Activated CD8-positive, alpha-beta T cell treated with anti-CD3 and anti-CD28 coated beads for 36 hours (primary cell): ENCODE measurements at regions of chr1 and their contacts with region 1.

Region 1: DNA sequence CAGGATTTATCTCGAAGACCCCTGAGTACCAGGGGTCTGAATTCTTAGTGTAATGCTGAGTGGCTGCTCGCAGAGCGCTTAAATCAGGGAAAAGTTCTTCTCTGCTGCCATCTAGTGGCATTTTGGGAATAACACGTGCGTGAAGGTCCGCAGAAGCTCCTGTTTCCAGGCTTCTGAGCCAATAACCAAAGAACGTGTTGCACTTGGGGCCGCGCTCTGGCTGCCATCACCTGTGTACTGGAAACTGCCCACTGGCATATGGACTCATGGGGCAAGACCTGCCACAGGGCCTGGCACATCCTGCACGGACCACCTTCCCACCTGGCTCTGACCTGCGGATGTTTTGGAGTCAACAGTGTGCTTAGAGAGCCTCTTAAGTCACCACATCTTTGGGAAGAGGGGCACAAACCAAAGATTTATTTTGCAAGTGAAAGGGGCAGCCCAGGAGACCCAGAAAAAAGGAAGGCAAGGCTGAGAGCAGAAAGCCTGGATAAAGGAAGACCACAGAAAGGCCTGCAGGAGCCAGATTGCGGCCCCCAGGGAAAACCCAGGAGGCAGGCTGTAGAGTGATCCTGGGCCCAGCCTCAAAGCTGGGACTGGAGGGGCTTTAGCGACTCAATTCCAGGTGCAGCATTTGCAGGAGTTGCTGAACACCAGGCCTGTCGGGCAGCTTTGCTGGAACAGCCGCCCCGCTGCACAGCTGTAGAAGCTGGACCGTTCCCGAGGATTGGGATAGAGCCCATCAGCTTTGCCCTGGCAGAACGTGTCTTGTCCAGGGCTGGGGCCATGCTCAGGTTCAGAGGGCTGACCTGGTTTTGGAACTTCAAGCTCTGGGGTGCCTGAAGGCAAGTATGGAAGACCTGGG is 13.0 kb downstream of the CHIT1 start:
- DNase-seq: peak; percentile 69
- ATAC-seq: peak; percentile 67
- H3K4me3 Mint-ChIP-seq: no peak overlapping the region
- H3K27ac Mint-ChIP-seq: no peak overlapping the region
- H3K4me1 Mint-ChIP-seq: no peaks in the 10 kb centered on the region
- H3K27me3 Mint-ChIP-seq: no peaks in the 10 kb centered on the region
- CTCF ChIP-seq: peak; percentile 83

Region 2: DNA sequence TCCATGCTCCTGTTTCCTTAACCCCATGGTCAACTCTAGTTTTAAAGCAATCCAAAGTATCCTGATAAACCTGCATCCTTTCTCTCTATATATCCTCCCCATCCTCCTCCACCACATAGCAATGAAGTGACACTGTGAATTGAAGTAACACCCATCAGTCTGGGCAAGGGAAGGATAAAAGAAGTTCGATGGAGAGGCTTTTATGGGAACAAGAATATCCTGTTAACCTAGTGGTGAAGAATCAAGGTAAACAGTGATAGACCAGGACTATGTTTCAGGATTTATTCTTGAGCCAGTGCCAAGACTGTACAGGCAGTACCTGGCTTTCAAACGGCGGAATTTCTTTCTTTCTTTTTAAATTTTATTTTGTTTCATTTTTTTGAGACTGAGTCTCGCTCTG is 345.1 kb before region 1 on chr1:
- CTCF ChIA-PET with region 1: no interaction called
- POLR2A ChIA-PET with region 1: no interaction called
- intact Hi-C with region 1: no loop called
- DNase-seq: no peak
- ATAC-seq: no peak
- H3K4me3 Mint-ChIP-seq: no peak overlapping the region
- H3K27ac Mint-ChIP-seq: no peak overlapping the region
- H3K4me1 Mint-ChIP-seq: no peaks in the 10 kb centered on the region
- H3K27me3 Mint-ChIP-seq: peaks cover 3% of the 10 kb centered on the region
- CTCF ChIP-seq: no peak

Region 3: GRCh38 chr1:203017692-203018091 is 198.8 kb before region 1 on chr1:
- CTCF ChIA-PET with region 1: no interaction called
- POLR2A ChIA-PET with region 1: no interaction called
- intact Hi-C with region 1: no loop called
- DNase-seq: no peak
- ATAC-seq: no peak
- H3K4me3 Mint-ChIP-seq: no peak overlapping the region
- H3K27ac Mint-ChIP-seq: no peak overlapping the region
- H3K4me1 Mint-ChIP-seq: peaks cover 8% of the 10 kb centered on the region
- H3K27me3 Mint-ChIP-seq: no peaks in the 10 kb centered on the region
- CTCF ChIP-seq: no peak

Region 4: GRCh38 chr1:203084588-203085502 is 131.7 kb before region 1 on chr1:
- CTCF ChIA-PET with region 1: interaction called, 14 read pairs
- POLR2A ChIA-PET with region 1: no interaction called
- intact Hi-C with region 1: no loop called
- DNase-seq: peak; percentile 58
- ATAC-seq: peak; percentile 71
- H3K4me3 Mint-ChIP-seq: no peak overlapping the region
- H3K27ac Mint-ChIP-seq: no peak overlapping the region
- H3K4me1 Mint-ChIP-seq: no peaks in the 10 kb centered on the region
- H3K27me3 Mint-ChIP-seq: peaks cover 9% of the 10 kb centered on the region
- CTCF ChIP-seq: peak; percentile 66

Region 5: DNA sequence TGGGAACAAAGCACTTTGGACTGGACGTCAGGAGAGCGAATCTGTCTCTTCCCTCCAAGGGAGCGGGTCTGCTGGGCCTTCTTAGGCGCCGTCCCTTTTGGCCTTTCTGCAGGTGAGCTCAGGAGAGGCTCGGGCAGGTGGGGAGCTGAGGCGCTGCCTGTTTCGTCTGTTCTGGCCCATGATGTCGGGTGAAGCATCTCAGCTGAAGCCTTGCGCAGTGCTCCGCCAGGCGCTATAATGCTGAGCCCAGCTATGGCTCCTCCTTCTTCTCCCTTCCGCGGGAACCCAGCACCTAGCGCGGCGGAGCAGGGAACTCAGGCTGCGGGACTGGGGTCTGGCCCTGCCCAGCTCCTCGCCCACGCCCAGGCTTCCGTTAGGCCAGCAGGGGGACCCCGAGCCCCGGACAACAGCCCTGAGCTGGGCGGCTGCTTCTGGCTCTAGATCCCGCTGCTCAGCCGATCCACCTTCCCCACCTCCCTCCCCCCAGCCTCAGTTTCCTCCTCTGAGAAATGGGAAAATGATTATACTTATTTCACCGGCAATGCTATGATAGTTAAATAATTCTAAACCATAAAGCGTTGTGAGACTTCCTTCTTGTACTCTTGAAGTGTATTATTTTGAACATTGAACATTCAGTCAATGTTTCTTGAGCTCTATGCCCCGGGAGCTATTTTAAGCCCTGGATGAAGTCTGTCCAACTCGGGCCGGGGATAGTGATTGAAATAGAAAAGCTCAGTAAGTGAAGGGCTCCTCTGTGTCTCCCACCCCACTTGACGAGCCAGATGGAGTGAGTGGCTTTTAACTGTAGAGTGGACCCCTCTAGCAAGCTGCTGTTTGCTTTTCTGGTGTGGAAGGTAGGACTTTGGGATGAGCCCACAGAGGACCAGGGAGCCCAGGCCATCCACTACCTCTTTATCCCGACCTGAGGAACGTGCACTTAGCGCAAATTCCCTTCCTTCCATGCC is 98.6 kb before region 1 on chr1:
- CTCF ChIA-PET with region 1: interaction called, 35 read pairs
- POLR2A ChIA-PET with region 1: no interaction called
- intact Hi-C with region 1: loop called (anchors 5 kb)
- DNase-seq: peak; percentile 74
- ATAC-seq: peak; percentile 77
- H3K4me3 Mint-ChIP-seq: no peak overlapping the region
- H3K27ac Mint-ChIP-seq: no peak overlapping the region
- H3K4me1 Mint-ChIP-seq: no peaks in the 10 kb centered on the region
- H3K27me3 Mint-ChIP-seq: peaks cover 34% of the 10 kb centered on the region
- CTCF ChIP-seq: peak; percentile 55

Region 6: DNA sequence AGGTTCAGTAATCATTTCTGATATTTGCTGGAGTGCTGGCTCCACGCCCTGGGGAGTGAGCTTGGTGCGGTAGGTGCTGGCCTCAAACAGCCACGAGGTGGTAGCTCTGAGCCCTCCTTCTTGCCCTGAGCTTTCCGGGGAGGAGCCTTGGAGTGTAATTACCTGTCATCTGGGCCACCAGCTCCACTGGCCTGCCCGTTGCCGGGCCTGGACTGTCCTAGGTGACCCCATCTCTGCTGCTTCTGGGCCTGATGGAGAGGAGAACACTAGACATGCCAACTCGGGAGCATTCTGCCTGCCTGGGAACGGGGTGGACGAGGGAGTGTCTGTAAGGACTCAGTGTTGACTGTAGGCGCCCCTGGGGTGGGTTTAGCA is 50.0 kb before region 1 on chr1:
- CTCF ChIA-PET with region 1: interaction called, 17 read pairs
- POLR2A ChIA-PET with region 1: no interaction called
- intact Hi-C with region 1: no loop called
- DNase-seq: peak; percentile 39
- ATAC-seq: peak; percentile 71
- H3K4me3 Mint-ChIP-seq: no peak overlapping the region
- H3K27ac Mint-ChIP-seq: no peak overlapping the region
- H3K4me1 Mint-ChIP-seq: no peaks in the 10 kb centered on the region
- H3K27me3 Mint-ChIP-seq: peaks cover 11% of the 10 kb centered on the region
- CTCF ChIP-seq: no peak

Region 7: GRCh38 chr1:203172128-203173010 is 44.1 kb before region 1 on chr1:
- CTCF ChIA-PET with region 1: interaction called, 17 read pairs
- POLR2A ChIA-PET with region 1: no interaction called
- intact Hi-C with region 1: no loop called
- DNase-seq: peak; percentile 56
- ATAC-seq: peak; percentile 74
- H3K4me3 Mint-ChIP-seq: no peak overlapping the region
- H3K27ac Mint-ChIP-seq: no peak overlapping the region
- H3K4me1 Mint-ChIP-seq: no peaks in the 10 kb centered on the region
- H3K27me3 Mint-ChIP-seq: no peaks in the 10 kb centered on the region
- CTCF ChIP-seq: peak; percentile 94

Region 8: GRCh38 chr1:203202431-203203245 is 13.9 kb before region 1 on chr1:
- CTCF ChIA-PET with region 1: interaction called, 23 read pairs
- POLR2A ChIA-PET with region 1: interaction called, 5 read pairs
- intact Hi-C with region 1: no loop called
- DNase-seq: no peak
- ATAC-seq: no peak
- H3K4me3 Mint-ChIP-seq: no peak overlapping the region
- H3K27ac Mint-ChIP-seq: no peak overlapping the region
- H3K4me1 Mint-ChIP-seq: no peaks in the 10 kb centered on the region
- H3K27me3 Mint-ChIP-seq: no peaks in the 10 kb centered on the region
- CTCF ChIP-seq: no peak

Region 9: GRCh38 chr1:203638950-203639349 is 422.4 kb after region 1 on chr1:
- CTCF ChIA-PET with region 1: no interaction called
- POLR2A ChIA-PET with region 1: no interaction called
- intact Hi-C with region 1: no loop called
- DNase-seq: no peak
- ATAC-seq: peak; percentile 47
- H3K4me3 Mint-ChIP-seq: no peak overlapping the region
- H3K27ac Mint-ChIP-seq: no peak overlapping the region
- H3K4me1 Mint-ChIP-seq: peaks cover 42% of the 10 kb centered on the region
- H3K27me3 Mint-ChIP-seq: no peaks in the 10 kb centered on the region
- CTCF ChIP-seq: no peak